AG04449 (cell line): ENCODE measurements at regions of chr10 and their contacts with region 1.

Region 1: GRCh38 chr10:115801992-115802391 is 471.0 kb downstream of the GFRA1 start:
- DNase-seq: no peak
- H3K4me3 ChIP-seq: no peak overlapping the region
- CTCF ChIP-seq: no peak

Region 2: GRCh38 chr10:115773832-115774231 is 28.2 kb before region 1 on chr10:
- CTCF ChIA-PET with region 1: interaction called, 14 read pairs
- POLR2A ChIA-PET with region 1: no interaction called
- DNase-seq: no peak
- H3K4me3 ChIP-seq: no peak overlapping the region
- CTCF ChIP-seq: no peak

Region 3: GRCh38 chr10:115790220-115790619 is 11.8 kb before region 1 on chr10:
- CTCF ChIA-PET with region 1: interaction called, 27 read pairs
- POLR2A ChIA-PET with region 1: no interaction called
- DNase-seq: no peak
- H3K4me3 ChIP-seq: no peak overlapping the region
- CTCF ChIP-seq: no peak

Region 4: DNA sequence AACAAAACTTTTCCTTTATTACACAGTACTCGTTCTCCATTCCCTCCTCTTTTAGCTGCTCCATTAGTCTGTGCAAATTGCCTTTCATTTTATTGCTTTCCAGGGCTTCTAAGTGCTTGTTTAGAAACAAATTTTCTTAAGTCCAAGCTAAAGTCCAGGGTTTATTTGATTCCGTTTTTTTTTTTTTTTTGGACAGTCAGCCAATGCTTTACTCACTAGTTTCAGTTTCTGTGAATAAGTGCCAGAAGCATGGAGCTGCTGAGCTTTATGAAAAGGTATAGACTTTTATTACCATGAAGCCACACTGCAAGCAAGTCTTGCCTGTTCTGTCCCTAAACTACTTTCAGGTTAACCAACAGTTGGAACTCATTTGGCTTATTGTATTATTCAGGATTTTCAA is 16.0 kb after region 1 on chr10:
- CTCF ChIA-PET with region 1: interaction called, 37 read pairs
- POLR2A ChIA-PET with region 1: no interaction called
- DNase-seq: no peak
- H3K4me3 ChIP-seq: peak overlapping the region; percentile 27
- CTCF ChIP-seq: no peak

Region 5: DNA sequence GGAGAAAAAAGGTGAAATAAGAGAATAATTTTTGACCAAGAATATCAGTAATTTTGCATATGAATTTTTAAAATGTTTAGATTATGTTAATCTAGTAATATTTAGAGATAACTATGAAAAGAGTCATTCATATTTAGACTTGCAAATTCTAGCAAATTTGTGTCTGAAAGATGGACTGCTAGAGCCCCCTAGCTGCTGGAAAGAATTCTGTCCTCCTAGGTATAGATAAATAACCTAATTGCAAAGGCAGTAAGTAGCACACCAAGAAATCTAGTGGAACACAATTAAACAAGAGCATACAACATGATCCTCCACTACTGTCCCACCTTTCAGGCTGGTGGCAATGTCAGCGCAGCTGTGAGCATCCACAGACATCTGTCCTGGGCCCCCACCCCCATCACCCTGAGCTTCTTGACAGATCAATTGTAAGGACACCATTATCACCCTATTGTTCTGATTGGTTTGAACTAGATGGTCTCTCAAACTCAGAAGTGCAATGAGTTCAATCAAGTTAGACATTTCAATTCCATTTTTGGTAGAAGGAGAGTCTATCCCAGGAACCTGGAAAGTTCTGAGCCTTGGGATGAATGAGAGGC is 486.0 kb after region 1 on chr10:
- CTCF ChIA-PET with region 1: interaction called, 112 read pairs
- POLR2A ChIA-PET with region 1: no interaction called
- DNase-seq: no peak
- H3K4me3 ChIP-seq: no peak overlapping the region
- CTCF ChIP-seq: peak; percentile 44

Region 6: DNA sequence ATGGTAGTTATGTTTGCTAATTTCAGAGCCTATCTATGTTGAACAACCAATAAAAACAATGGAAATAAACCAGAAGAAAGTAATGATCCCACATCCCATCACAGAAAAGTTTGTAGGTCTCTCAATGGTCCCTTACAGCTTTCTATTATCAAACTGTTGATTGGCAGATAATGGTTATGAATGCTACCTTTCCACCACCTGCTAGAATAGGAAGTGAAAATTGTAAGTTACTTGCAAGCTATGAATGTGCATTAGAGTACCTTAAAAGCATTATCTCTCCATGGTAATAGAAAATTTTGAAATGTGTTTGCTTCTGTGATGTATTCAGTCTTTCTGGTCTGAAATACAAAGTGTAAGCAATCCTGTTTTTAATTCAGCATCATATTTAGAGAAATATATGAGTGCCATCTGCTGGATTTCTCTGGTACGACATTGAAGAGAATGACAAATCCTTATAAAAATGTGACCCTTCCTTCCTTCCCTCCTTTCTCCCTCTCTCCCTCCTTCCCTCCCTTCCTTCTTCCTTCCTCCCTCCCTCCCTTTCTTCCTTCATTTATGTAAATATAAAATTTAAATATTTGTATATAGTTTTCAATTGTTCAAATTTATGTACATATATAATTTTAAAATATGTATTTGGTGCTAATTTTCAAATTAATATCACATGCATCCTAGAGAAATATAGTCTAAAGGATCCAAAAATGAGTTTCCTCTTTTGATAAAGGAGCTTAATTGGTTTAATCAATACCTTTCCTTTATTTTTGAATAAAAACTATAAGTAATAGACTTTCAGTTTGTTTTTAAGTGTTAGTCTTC is 584.2 kb after region 1 on chr10:
- CTCF ChIA-PET with region 1: interaction called, 14 read pairs
- POLR2A ChIA-PET with region 1: no interaction called
- DNase-seq: peak; percentile 3
- H3K4me3 ChIP-seq: no peak overlapping the region
- CTCF ChIP-seq: peak; percentile 28

Region 7: GRCh38 chr10:116720241-116720643 is 918.2 kb after region 1 on chr10:
- CTCF ChIA-PET with region 1: no interaction called
- POLR2A ChIA-PET with region 1: no interaction called
- DNase-seq: no peak
- H3K4me3 ChIP-seq: no peak overlapping the region
- CTCF ChIP-seq: no peak